IMR-90 (cell line): ENCODE measurements at regions of chr17 and their contacts with region 1.

Region 1: DNA sequence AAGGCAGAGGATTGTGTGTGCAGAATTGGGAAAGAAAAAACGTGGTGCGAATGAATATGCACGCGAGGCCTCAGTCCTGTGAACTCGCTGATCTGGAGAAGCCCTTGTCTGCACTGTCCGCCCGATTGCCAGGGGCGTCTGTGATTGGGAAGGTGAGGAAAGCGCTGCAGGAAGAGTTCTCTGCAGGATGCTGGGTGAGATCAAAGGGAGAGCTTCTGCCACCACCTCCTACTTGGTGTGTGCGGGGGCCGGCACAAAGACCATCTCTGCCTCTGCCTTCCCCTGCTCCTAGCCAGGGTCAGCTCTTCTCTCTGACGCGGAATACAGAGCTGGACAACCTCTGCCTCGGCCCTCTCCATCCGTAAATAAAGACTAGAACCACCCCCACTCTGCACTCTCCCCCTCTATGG is 852 bp upstream of the RAB5C start:
- DNase-seq: no peak
- ATAC-seq: no peak
- H3K4me3 ChIP-seq: peak overlapping the region; percentile 33
- H3K27ac ChIP-seq: no peak overlapping the region
- H3K4me1 ChIP-seq: peaks cover 7% of the 10 kb centered on the region
- H3K27me3 ChIP-seq: no peaks in the 10 kb centered on the region
- CTCF ChIP-seq: no peak
- POLR2A ChIP-seq: no peak
- RAD21 ChIP-seq: no peak

Region 2: DNA sequence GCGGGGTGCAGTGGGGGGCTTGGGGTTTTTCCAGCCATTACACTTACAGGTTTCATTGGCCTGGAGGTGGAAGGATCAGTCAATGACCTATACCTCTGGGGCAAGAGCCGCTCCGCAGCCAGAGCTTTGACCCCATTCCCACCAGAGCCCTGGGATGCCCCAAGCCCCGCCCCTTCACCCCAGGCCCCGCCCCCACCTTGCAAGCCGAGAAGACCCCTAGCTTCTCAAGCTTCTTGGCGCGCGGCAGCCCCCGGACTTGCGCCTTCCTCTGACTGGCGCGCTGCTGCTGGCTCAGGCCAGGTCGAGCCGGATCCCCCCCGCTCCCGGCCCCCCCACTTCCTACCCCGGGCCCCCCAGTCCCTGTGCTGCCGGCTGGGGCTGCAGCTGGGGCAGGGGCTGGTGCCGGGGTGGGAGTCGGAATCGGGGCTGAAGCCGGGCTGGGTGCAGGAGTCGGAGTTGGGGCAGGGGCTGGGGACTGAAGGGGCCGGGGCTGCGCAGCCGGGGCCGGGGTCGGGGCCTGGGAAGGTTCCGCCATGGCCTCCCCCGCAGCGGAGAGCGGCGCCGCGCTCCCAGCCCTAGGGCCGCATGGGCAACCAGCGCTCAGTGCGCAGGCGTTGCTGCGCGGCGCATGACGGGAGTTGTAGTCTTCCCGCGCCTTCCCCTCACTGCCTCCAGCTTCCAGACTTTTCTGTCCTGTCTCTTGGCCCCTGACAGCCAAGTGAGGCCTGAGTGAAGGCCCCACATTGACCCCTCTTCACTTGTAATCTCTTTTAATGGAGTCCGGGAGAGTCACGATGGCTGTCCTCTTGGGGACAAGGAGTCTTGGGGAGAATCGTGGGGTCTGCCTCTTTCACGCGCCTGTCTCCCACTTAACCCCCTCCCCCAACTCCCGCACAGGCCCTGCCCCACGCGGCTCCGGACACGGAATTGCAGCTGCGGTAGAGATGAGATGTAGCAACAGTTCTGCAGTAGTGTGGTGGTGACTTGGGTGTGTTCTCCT is 34.6 kb before region 1 on chr17 and contains the start of gene KAT2A:
- CTCF ChIA-PET with region 1: no interaction called
- POLR2A ChIA-PET with region 1: no interaction called
- dilution Hi-C with region 1: no loop called
- in situ Hi-C with region 1: no loop called
- intact Hi-C with region 1: loop called (anchors 1 kb)
- DNase-seq: peak; percentile 77
- ATAC-seq: peak; percentile 96
- H3K4me3 ChIP-seq: peak within 1 kb of the TSS; percentile 46
- H3K27ac ChIP-seq: peak within 1 kb of the TSS; percentile 53; the same call in 1 of the 2 replicates
- H3K4me1 ChIP-seq: peaks cover 7% of the 10 kb centered on the region
- H3K27me3 ChIP-seq: no peaks in the 10 kb centered on the region
- CTCF ChIP-seq: no peak
- POLR2A ChIP-seq: no peak
- RAD21 ChIP-seq: no peak
- total RNA-seq, gene KAT2A: 5.3 and 6.3 TPM in 2 replicates

Region 3: DNA sequence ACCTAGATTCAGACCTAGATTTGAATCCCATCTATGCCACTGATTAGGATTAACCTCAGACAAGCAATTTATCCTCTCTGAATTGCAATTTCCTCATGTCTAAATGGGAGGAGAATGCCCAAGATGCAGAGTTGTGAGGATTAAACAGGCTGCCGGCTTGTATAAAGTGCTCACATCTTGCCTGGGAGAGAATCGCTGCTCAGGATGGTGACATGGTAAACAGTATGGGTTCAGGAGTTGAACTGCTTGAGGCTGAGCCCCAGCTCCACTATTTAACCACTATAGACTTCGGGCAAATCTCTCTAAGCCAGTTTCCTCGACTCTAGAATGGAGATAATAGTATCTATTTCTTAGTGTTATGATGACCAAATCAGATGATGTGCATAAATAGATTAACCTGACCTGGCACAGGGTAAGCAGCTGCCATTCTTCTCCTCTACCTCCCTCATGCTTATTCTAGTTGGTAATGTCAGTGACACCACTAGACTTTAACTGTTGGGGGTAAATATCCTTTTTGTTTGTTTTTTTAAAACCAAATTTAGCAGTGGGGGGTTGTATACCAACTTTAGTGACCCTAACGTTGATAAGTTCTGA is 841.8 kb after region 1 on chr17:
- CTCF ChIA-PET with region 1: no interaction called
- POLR2A ChIA-PET with region 1: no interaction called
- dilution Hi-C with region 1: no loop called
- in situ Hi-C with region 1: no loop called
- intact Hi-C with region 1: no loop called
- DNase-seq: no peak
- ATAC-seq: peak; percentile 2
- H3K4me3 ChIP-seq: peak overlapping the region; percentile 12; the same call in 1 of the 2 replicates
- H3K27ac ChIP-seq: peak overlapping the region; percentile 42; the same call in 1 of the 2 replicates
- H3K4me1 ChIP-seq: peaks cover 6% of the 10 kb centered on the region
- H3K27me3 ChIP-seq: no peaks in the 10 kb centered on the region
- CTCF ChIP-seq: no peak
- POLR2A ChIP-seq: no peak
- RAD21 ChIP-seq: no peak